ENCODE measurements at regions of chr3 and their contacts with region 1.

Region 1: DNA sequence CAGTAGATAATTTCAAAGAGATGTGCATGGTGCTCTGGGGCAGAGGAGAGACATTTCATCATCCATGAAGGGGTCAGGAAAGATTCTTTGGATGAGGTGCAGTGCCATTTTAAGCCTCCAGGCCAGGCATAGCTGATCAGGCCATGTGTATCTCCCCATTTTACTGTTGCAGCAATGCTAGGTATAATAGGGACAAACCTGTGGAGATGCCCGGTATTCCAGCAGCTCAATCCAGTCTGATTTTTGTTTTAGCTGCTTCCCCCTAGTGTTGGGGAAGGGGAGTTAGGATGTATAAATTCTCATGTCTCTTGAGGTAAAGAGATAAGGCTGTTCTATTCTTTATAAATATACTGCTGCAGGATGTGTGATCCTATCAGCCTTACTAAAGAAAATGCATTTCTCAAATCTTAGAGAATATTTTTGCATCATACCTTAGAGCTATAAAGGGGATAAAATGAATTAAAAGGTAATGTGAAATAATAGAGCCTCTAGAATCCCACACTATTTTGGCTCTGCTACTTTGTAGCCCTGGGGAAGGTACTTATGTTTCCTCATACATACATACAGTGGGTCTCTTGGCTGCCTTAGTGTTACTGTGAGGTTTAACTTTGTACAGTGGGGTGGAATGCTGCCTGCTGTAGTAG is 5.2 kb downstream of the CDV3 start:
- DNase-seq: no peak
- H3K4me3 ChIP-seq: peak overlapping the region; percentile 11; the same call in 1 of the 2 replicates
- H3K27ac ChIP-seq: no peak overlapping the region
- H3K27me3 ChIP-seq: no peaks in the 10 kb centered on the region
- CTCF ChIP-seq: peak; percentile 76

Region 2: GRCh38 chr3:132730891-132731580 is 847.6 kb before region 1 on chr3:
- CTCF ChIA-PET with region 1: interaction called, 10 read pairs
- POLR2A ChIA-PET with region 1: no interaction called
- DNase-seq: no peak
- H3K4me3 ChIP-seq: no peak overlapping the region
- H3K27ac ChIP-seq: no peak overlapping the region
- H3K27me3 ChIP-seq: no peaks in the 10 kb centered on the region
- CTCF ChIP-seq: peak; percentile 45

Region 3: DNA sequence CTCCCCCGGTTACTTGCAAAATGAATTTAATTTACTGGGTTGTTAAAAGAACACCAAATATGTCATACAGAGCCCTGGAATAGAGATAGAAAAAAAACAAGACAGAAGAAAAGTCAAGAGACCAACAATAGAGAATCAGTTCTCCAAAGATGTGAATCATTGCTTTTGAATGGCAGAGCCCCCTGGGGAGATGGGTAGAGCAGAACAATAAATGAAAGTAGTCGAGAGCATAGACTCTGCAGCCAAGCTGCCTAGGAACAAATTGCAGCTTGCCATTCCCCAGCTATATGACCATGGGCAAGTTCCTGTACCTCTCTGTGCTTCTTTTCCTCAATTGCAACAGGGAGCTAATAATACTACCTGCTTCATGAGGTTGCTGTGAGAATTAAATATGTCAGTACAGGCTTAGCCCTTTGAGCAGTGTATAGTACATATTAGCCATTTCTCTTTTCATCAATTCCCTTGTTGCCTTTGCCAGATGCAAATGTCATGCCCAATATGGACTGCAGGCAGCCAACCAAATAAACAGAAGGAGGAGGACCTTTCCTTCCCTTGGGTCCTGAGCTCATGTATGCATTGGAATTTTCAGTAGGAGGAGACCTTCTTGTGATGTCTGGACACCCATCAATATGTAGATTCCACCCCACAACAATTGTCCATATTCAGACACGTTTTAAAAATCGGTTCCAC is 203.8 kb before region 1 on chr3:
- CTCF ChIA-PET with region 1: no interaction called
- POLR2A ChIA-PET with region 1: no interaction called
- DNase-seq: no peak
- H3K4me3 ChIP-seq: no peak overlapping the region
- H3K27ac ChIP-seq: no peak overlapping the region
- H3K27me3 ChIP-seq: no peaks in the 10 kb centered on the region
- CTCF ChIP-seq: no peak

Region 4: DNA sequence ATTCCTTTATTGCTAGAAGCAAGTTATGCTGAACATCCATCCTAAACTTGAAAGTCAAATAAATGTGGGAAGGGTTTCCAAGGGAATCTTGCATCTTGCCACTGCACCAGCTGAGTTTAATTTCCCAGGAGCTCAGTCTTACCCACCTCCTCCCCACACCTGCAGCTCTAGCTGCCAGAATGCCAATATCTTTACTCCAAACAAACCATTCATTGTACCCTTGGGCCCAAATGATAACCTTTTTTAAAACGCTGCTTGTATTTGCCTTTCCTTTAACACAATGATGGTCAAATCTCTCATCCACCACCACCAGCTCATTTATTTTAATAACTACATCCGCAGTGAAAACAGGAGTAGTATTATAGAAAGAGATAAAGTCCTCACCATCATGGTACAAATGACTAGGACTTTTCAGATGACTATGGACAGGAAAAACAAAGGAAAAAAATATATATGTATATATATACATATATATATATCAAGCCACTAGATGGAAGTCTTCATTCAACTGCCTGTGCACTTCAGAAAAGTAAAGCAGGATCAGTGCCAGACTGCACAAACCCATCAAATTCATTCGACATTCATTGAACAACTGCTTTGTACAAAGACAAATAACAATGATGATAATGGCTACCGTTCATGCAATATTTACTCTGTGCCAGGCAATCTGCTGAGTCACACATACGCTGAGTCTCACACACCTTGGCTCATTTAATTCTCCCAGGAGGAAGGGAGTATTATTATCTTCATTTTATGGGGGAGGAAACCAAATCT is 134.8 kb before region 1 on chr3:
- CTCF ChIA-PET with region 1: interaction called, 17 read pairs
- POLR2A ChIA-PET with region 1: no interaction called
- DNase-seq: no peak
- H3K4me3 ChIP-seq: no peak overlapping the region
- H3K27ac ChIP-seq: no peak overlapping the region
- H3K27me3 ChIP-seq: no peaks in the 10 kb centered on the region
- CTCF ChIP-seq: no peak

Region 5: DNA sequence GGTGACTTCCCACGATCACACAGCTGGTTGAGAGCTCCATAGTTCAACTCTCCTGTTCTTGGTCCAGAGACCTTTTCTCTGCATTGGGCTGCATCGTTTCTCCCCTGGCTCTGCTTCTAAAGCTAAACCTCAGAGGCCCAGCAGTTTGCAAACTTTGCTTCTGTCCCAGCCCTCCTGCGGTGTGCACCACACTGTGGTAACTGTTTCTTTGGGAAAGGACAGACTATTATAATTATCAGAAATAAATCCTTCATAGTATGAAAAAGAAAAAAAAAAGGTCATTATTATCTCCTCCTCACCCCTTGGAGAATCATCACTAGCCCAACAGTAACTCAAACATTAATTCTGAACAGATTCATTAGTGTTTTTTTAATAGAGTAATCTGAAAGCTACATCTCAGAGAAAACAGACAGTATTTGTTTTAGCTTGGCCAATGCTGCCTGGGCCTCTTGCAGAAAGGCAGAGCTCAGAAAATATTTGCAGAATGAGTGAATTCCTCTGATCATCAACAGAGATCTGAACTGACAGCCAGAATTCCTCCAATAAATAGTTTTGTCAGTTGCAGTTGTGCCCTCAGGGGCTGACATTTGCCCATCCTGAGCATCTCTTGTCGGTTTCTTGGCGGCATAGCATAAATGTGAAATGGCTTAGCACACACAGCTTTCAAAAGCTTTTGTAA is 125.9 kb before region 1 on chr3:
- CTCF ChIA-PET with region 1: interaction called, 14 read pairs
- POLR2A ChIA-PET with region 1: no interaction called
- DNase-seq: no peak
- H3K4me3 ChIP-seq: no peak overlapping the region
- H3K27ac ChIP-seq: no peak overlapping the region
- H3K27me3 ChIP-seq: peaks cover 5% of the 10 kb centered on the region
- CTCF ChIP-seq: no peak

Region 6: GRCh38 chr3:133459400-133459799 is 119.3 kb before region 1 on chr3:
- CTCF ChIA-PET with region 1: interaction called, 54 read pairs
- POLR2A ChIA-PET with region 1: interaction called, 6 read pairs
- DNase-seq: no peak
- H3K4me3 ChIP-seq: no peak overlapping the region
- H3K27ac ChIP-seq: no peak overlapping the region
- H3K27me3 ChIP-seq: peaks cover 2% of the 10 kb centered on the region
- CTCF ChIP-seq: no peak

Region 7: DNA sequence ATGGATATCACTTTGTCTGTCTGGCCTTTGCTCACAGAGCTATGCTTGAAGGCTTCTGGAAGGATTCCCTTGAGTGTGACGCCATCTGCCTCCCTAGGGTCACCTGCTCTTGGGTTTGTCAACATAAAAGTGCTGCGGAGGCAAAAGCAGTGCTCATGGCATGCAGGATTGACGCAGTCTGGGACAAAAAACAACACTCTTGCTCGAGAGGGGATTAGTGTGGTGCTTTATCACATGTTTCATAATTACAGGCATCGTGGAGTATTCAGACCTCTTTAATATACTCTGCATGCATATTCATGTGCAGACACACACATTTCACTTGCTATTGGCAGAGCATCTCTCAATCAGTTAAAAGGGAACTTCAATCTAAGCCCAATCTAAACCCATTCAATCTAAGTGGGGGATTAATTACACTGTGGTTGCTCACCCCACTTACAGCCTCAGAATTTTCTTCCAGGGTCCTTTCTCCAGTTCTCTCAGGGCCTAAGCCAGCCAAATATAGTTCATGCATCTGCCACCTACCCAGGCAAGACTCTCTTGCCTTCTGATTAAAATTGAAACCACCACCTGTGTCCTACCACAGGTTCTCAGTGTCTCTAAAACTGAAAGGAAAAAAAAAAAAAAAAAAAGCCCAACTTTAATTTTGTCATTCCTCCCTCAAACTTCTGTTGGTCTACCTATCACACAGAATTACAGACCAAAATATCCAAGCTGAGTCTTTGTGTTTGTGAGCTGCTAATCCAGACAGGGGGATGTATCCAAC is 103.2 kb before region 1 on chr3:
- CTCF ChIA-PET with region 1: interaction called, 17 read pairs
- POLR2A ChIA-PET with region 1: interaction called, 7 read pairs
- DNase-seq: no peak
- H3K4me3 ChIP-seq: no peak overlapping the region
- H3K27ac ChIP-seq: peak overlapping the region; percentile 75
- H3K27me3 ChIP-seq: no peaks in the 10 kb centered on the region
- CTCF ChIP-seq: no peak

Region 8: DNA sequence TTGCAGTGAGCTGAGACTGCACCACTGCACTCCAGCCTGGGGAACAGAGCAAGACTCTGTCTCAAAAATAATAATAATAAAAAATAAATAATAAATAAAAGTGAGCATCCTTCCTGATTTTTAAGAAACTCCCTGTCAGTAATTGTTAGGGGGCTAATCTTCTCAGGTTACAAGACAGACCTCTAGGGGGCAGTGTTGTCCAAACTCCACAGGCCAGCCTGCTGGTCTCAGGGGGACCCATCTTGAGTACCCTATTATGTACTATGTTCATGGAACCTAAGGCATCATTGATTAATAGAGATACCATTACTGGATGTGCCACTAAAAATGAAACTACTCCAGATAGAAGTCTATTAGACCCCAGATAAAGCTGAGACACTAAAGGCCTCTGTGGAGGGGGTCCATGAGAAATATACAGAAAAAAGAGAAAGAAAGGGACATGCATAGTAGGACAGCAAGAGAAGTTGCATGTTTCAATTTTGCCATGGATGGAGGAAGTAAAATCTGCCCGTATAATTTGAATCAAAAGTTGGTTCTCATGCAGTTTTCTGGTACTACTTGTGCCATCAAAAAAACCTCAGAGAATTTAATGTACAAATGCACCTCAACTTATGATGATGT is 90.6 kb before region 1 on chr3:
- CTCF ChIA-PET with region 1: interaction called, 25 read pairs
- POLR2A ChIA-PET with region 1: interaction called, 5 read pairs
- DNase-seq: no peak
- H3K4me3 ChIP-seq: no peak overlapping the region
- H3K27ac ChIP-seq: no peak overlapping the region
- H3K27me3 ChIP-seq: no peaks in the 10 kb centered on the region
- CTCF ChIP-seq: peak; percentile 46

Region 9: DNA sequence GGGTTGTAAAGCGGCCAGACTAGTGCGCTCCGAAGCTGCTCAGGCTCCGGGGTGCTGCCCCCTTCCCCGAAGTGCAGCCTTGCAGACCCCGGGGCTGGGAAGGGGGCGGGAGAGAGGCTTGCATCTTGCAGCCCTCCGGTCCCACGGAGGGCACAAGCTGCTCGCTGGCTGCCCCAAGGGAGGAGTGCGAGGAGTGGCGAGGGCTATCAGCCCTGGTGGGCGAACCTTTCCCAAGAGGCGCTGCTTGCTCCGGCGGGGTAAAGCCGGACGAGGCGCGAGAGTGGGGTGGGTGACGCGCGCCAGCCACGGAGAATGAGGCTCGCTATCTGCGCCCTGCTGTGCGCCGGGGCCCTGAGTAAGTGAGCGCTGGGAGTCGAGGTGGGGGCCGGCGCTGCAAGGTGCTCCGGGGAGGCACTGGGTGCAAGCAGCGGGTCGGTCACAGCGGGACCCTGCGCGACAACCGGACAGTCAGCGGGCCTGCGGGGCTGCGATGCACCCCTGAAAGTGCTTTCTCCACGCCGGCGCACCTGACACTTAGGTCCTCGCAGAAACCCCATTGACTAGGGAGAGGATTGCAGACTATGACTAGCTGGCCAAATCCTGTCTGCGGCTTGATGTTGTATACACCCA is 95.7 kb after region 1 on chr3:
- CTCF ChIA-PET with region 1: no interaction called
- POLR2A ChIA-PET with region 1: no interaction called
- DNase-seq: no peak
- H3K4me3 ChIP-seq: no peak overlapping the region
- H3K27ac ChIP-seq: no peak overlapping the region
- H3K27me3 ChIP-seq: peaks cover 40% of the 10 kb centered on the region
- CTCF ChIP-seq: no peak

Measured in AG04450 (cell line).